A549 (cell line): ENCODE measurements at regions of chr12 and their contacts with region 1.

Region 1: DNA sequence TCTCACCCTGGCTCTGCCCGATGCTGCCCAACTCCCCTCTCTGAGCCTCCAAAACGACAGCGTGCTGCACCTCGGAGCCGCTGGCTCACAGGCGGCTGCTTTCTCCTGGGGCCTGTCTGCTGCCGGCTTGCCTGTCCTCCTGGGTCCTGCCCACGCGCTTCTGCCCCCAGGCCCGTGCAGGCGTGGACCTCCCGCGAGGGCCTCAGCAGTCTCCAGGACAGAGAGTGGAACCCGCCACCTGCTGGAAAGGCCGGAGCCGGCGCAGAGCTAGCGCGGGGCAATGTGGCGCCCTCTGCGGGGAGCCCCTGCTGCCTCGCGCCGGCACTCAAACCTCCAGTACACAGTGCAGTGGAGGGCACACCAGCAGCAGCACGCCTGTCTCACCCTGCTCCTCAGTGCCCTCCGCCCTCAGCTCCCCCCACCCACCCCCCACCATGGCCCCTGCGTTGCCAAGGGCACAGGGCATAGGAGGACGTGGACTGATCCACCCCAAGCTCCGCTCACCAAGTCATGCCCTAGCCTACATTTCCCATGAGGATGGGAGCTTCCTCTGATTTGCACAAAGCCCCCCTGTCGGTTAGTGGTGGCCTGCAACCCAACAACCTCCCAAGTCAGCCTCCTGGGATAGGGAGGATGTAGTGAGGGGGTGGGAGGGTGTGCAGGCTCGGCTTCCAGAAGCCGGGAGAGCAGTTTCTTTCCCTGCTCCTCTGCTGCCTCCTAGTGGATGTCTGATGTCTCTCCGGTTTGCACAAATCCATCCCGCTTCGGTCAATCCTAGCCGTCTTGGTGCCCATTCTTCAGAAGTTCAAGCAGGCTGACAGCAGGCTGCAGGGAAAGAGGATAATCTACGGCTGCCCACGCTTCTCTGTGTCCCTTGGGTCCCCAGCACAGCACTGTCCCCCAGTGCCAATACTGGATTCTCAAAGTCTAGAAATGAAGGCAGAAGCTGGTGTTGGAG is 25.2 kb downstream of the KRT8 start:
- DNase-seq: peak; percentile 82 to 98
- ATAC-seq: peak; percentile 88 to 90
- H3K4me3 ChIP-seq: 0 out of 3 replicates have a peak overlapping the region, but pooled peaks have one; percentile 14
- H3K27ac ChIP-seq: peak overlapping the region; percentile 94 to 97
- H3K4me1 ChIP-seq: peaks cover 61% of the 10 kb centered on the region
- CTCF ChIP-seq: peak; percentile 97
- EP300 ChIP-seq: no peak
- POLR2A ChIP-seq: 0 out of 2 replicates have a peak, but pooled peaks have one; percentile 23
- RAD21 ChIP-seq: peak; percentile 90 to 99

Region 2: DNA sequence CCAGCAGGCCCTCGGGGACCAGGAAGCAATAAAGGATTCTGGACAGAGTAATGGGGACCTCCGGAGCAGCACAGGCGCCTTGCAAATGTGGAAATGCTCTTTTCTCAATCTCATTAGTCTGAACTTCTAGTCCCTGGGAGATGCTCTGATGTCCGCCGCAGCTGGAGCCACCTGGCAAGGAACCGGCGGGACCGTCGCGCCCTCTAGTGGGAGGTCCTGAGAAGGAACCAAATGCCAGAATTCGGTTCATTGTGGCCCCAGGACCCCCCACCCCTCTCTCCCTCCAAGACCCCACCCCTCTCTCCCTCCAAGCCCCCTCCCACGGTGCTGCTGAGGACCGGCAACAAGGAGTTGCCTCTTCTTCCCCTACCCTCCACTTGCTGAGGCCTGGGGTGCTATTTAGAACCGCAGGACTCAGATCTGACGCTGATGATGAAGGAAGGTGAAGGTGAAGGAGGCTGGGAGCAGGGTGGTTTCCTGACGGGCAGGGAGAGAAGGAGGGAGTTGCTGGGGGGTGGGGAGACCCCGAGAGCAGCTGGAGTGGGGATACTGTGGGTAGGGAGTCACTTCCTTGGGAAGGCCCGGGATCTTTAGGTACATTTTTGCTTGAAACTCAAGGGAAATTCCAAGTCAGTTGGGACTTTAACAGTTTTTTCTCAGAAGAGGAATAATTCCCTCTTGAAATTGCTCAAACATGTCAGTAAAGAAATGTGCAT is 757.7 kb before region 1 on chr12:
- CTCF ChIA-PET with region 1: interaction called, 23 read pairs
- POLR2A ChIA-PET with region 1: no interaction called
- DNase-seq: peak; percentile 67 to 68
- ATAC-seq: peak; percentile 64 to 75
- H3K4me3 ChIP-seq: no peak overlapping the region
- H3K27ac ChIP-seq: no peak overlapping the region
- H3K4me1 ChIP-seq: peaks cover 5% of the 10 kb centered on the region; the same call in 2 of the 3 replicates
- CTCF ChIP-seq: peak; percentile 80
- EP300 ChIP-seq: no peak
- POLR2A ChIP-seq: no peak
- RAD21 ChIP-seq: peak; percentile 77 to 79

Region 3: GRCh38 chr12:52213512-52214420 is 665.9 kb before region 1 on chr12:
- CTCF ChIA-PET with region 1: interaction called, 17 read pairs
- POLR2A ChIA-PET with region 1: no interaction called
- DNase-seq: peak; percentile 88 to 91
- ATAC-seq: peak; percentile 74 to 84
- H3K4me3 ChIP-seq: no peak overlapping the region
- H3K27ac ChIP-seq: peak overlapping the region; percentile 89 to 96
- H3K4me1 ChIP-seq: peaks cover 76% of the 10 kb centered on the region
- CTCF ChIP-seq: peak; percentile 97
- EP300 ChIP-seq: no peak
- POLR2A ChIP-seq: no peak
- RAD21 ChIP-seq: peak; percentile 97 to 98

Region 4: GRCh38 chr12:52285172-52285745 is 594.4 kb before region 1 on chr12:
- CTCF ChIA-PET with region 1: interaction called, 35 read pairs
- POLR2A ChIA-PET with region 1: interaction called, 18 read pairs
- DNase-seq: peak; percentile 58 to 84
- ATAC-seq: no peak
- H3K4me3 ChIP-seq: peak overlapping the region; percentile 59
- H3K27ac ChIP-seq: peak overlapping the region; percentile 96 to 100
- H3K4me1 ChIP-seq: peaks cover 57% of the 10 kb centered on the region
- CTCF ChIP-seq: no peak
- EP300 ChIP-seq: peak; percentile 90 to 96; a peak in 4 of 5 replicates
- POLR2A ChIP-seq: peak; percentile 80
- RAD21 ChIP-seq: peak in 1 of 2 experiments; percentile 15; a peak in 1 of 5 replicates

Region 5: DNA sequence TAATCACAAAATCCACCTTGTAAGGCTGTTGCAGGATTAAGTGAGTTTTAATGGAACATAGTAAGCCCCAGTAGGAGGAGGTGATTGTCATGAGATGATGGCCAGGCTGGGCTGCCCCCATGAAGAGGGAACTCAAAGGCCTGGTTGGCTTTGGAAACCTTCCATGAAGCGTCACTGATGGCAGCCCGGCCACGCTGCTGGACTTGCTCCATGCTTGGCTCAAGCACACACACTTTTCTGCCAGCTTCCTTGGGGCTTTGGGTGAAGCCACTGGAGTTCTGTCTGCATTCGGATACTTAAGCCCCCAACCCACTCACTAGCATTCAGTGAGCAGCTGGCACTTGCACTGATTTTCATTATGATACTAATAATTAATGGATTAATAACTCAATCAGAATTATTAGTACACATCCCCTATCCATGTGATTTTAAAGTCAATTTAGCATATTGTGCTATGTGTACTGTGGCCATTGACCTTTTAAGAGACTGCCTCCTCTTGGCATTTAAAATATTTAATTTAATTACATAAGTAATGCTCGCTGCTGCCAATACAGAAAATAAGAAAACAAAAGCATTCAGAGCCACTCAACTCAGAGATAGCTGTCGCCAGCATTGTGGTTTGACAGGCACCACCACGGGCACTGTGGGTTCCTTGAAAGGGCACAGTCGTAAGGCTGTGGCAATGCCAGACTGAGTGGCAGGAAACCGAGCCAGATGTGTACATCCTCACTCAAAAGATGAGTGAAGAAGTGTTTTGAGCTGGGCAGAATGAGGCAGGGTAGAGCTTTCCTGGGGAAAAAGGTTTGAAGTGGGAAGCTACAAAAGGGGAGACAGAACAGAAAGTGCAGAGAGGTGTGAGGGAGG is 528.2 kb before region 1 on chr12:
- CTCF ChIA-PET with region 1: interaction called, 14 read pairs
- POLR2A ChIA-PET with region 1: no interaction called
- DNase-seq: no peak
- ATAC-seq: no peak
- H3K4me3 ChIP-seq: no peak overlapping the region
- H3K27ac ChIP-seq: no peak overlapping the region
- H3K4me1 ChIP-seq: peaks cover 1% of the 10 kb centered on the region; the same call in 1 of the 3 replicates
- CTCF ChIP-seq: no peak
- EP300 ChIP-seq: no peak
- POLR2A ChIP-seq: no peak
- RAD21 ChIP-seq: no peak

Region 6: DNA sequence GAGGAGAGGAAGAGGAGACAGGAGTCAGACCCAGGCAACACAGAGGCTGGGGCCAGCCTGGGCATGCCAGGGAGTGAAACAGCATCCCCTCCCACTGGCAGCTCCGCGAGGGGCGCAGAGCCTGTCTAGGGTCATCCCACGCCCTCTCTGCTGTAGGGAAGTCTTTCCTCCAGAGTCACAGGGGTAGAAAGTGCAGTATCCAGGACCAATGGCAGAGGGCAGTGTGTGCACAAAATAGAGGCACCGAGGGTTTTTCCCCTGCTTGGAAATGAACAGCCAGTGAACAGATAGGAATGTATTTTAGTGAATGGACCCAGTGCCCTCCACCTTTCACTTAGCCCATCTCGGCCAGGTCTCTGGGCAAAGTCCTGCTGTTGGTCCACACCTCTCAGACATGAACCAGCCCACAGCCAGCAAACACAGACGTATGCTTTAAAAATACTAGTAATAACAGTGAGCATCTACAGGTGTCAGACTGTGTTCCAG is 296.7 kb before region 1 on chr12:
- CTCF ChIA-PET with region 1: interaction called, 492 read pairs
- POLR2A ChIA-PET with region 1: no interaction called
- DNase-seq: peak; percentile 74 to 88
- ATAC-seq: peak; percentile 87 to 96
- H3K4me3 ChIP-seq: no peak overlapping the region
- H3K27ac ChIP-seq: peak overlapping the region; percentile 43 to 82
- H3K4me1 ChIP-seq: peaks cover 24% of the 10 kb centered on the region
- CTCF ChIP-seq: peak; percentile 85
- EP300 ChIP-seq: no peak
- POLR2A ChIP-seq: no peak
- RAD21 ChIP-seq: peak; percentile 94 to 97

Region 7: DNA sequence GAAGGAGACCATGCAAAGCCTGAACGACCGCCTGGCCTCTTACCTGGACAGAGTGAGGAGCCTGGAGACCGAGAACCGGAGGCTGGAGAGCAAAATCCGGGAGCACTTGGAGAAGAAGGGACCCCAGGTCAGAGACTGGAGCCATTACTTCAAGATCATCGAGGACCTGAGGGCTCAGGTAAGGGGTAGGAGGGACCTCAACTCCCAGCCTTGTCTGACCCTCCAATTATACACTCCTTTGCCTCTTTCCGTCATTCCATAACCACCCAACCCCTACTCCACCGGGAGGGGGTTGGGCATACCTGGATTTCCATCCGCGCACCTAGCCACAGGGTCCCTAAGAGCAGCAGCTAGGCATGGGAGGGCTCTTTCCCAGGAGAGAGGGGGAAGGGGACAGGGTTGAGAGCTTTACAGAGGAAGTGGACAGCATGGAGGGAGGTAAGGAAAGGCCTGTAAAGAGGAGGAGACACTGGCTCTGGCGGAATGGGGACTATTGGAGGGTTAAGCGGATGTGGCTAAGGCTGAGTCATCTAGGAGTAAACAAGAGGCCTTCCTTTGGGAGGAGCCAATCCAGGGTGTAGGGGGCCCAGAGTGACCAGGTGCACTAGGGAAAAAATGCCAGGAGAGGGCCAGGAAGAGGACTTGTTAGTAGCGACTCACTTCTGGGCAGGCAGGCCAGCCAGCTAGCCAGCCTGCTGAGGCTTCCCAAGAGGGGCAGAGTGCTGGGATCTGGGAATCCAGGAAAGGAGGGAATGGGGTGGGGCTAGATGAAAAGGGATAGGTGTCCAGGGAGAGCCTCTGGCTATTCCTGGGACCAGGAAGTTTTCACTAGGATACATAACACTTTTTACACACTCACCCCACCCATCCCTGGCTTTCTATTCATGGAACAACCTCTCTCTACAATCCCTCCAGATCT is 70.0 kb after region 1 on chr12:
- CTCF ChIA-PET with region 1: interaction called, 1,736 read pairs
- POLR2A ChIA-PET with region 1: no interaction called
- DNase-seq: peak; percentile 87 to 95
- ATAC-seq: peak; percentile 75 to 82
- H3K4me3 ChIP-seq: peak overlapping the region; percentile 91
- H3K27ac ChIP-seq: peak overlapping the region; percentile 96 to 97
- H3K4me1 ChIP-seq: peaks cover 66% of the 10 kb centered on the region
- CTCF ChIP-seq: no peak
- EP300 ChIP-seq: 0 out of 5 replicates have a peak, but pooled peaks of 1 of the 2 experiments have one; percentile 16
- POLR2A ChIP-seq: peak; percentile 49
- RAD21 ChIP-seq: no peak